Activated naive CD4-positive, alpha-beta T cell treated with anti-CD3 and anti-CD28 coated beads for 36 hours (primary cell): ENCODE measurements at regions of chr2 and their contacts with region 1.

Region 1: DNA sequence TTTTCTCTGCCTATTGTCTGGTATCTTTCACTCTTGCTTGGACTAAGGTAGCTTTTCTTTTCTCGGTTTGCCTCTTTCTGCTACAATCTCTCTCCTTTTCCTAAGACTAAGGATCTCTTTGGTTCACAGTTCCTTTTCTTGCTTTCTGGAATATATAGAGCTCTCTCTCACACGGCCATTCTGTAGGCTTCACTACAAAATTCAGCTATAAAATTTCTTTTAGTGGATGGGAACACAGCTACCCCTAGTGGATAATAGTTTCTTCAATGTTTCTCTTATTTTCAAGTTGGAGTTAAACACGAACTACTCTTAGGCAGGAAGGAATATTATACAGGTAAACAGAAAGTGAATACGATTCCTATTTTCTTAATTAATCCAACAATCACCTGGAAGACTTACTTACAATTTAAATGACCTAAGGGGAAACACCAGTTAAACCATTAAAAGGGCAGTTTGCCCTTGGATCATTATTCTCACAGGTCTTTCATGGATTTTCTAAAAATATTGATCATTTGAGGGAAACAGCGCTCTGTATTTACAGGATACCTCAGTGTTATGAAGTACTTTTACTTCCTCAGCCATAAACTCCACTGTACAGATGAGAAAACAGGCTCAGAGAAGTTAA is 140.5 kb downstream of the LRP2 start:
- DNase-seq: no peak
- H3K4me3 Mint-ChIP-seq: no peak overlapping the region
- H3K27ac Mint-ChIP-seq: no peak overlapping the region
- H3K4me1 Mint-ChIP-seq: no peaks in the 10 kb centered on the region
- H3K27me3 Mint-ChIP-seq: no peaks in the 10 kb centered on the region

Region 2: DNA sequence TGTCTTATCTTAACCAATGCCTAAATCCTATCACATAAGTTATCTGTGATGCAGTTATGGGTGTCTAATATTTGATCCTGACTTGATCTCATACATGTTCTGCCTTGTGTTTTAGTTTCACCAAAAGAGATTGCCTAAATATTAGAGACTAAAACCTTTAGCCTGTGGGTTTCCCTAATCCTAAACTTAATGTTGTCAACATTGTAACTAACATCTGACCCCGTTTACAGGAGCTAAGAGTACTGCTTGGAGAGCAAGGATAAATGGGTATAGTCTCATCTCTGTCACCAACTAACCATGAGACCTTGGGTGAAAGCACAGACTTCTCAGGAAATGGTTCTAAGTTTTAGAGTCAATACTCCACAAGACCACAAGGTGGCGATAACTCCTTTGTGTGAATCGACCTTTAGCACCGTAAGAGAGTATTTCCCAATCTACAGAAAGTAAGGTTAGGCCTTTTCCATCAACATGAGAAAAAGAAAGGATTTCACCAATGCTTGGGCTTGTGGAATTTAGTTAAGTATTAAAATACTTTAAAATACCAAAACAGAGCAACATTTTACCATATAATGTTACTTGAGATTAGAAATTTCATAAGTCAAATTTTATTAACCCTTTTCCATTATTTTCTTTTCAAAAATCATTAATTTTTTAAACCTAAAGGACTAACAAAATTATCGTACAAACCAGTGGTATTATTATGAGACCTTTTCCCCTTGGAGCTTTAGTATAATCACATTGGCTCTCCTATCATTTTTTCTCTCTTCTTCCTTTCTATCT is 260.2 kb before region 1 on chr2:
- CTCF ChIA-PET with region 1: no interaction called
- intact Hi-C with region 1: loop called (anchors 1 kb)
- DNase-seq: peak; percentile 27
- H3K4me3 Mint-ChIP-seq: no peak overlapping the region
- H3K27ac Mint-ChIP-seq: no peak overlapping the region
- H3K4me1 Mint-ChIP-seq: peaks cover 14% of the 10 kb centered on the region
- H3K27me3 Mint-ChIP-seq: peaks cover 4% of the 10 kb centered on the region

Region 3: DNA sequence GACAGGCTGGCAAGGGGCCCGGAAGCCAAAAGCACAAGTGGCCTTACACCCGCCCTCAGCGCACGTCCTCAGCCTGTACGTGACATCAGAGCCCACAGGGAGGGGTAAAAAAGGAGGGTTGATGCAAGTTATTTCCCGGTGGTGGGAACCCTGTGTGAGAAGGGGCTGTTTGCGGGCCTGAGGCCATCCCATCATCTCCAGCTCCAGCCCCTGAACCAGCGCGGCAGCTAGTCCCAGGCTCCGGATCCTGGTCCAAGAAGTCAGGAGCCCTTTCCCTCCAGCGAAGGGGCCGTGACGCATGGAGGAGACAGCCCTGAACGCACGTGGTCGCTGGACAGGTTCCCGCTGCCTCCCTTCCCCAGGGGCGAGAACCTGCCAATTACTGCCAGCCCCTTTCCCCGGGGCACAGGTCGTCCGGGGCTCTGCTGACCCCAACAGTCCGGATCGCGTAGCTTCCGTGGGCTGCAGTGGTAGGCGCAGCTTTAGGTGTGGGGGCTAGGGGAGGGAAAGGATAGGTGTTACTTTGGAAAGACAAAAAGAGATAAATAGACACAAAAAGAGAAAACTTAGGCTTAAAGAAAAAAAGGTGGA is 141.8 kb after region 1 on chr2:
- CTCF ChIA-PET with region 1: no interaction called
- intact Hi-C with region 1: no loop called
- DNase-seq: peak; percentile 63
- H3K4me3 Mint-ChIP-seq: peak overlapping the region; percentile 84
- H3K27ac Mint-ChIP-seq: peak overlapping the region; percentile 57
- H3K4me1 Mint-ChIP-seq: peaks cover 32% of the 10 kb centered on the region
- H3K27me3 Mint-ChIP-seq: peaks cover 31% of the 10 kb centered on the region